Endothelial cell of umbilical vein (primary cell): ENCODE measurements at regions of chr11 and their contacts with region 1.

Region 1: GRCh38 chr11:110195845-110196754 is 100.3 kb downstream of the RDX start:
- DNase-seq: peak; percentile 45
- H3K4me3 ChIP-seq: no peak overlapping the region
- H3K27ac ChIP-seq: peak overlapping the region; percentile 78
- H3K4me1 ChIP-seq: peaks cover 36% of the 10 kb centered on the region
- H3K27me3 ChIP-seq: no peaks in the 10 kb centered on the region
- CTCF ChIP-seq: no peak
- POLR2A ChIP-seq: peak; percentile 42

Region 2: DNA sequence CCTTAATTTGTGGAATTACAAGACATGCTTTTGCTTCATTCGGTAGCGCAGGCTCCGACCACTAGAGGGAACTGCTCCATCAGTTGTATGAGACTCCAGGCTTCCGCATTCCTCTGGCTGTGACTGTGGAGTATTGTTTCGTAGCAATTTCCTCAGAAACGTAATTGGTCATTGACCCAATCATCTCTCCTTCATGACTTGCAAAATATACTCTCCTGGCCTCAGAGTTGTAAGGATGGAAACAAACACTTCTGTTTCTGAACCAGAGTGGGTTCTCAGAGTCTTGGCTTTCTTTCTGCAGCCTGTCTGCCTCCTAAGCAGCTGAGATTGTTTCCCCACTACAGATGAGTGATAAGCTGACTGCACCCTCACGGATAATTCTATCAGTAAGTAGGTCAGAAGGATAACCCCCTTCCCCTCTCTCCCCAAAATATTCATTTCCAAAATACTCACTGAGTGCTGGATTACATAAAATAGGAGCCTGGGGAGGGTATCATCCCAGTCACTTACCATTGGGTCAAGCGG is 249.7 kb before region 1 on chr11:
- CTCF ChIA-PET with region 1: interaction called, 6 read pairs
- POLR2A ChIA-PET with region 1: no interaction called
- dilution Hi-C with region 1: no loop called
- intact Hi-C with region 1: loop called (anchors 1 kb)
- DNase-seq: peak; percentile 97
- H3K4me3 ChIP-seq: peak overlapping the region in 1 of 3 experiments; percentile 31
- H3K27ac ChIP-seq: peak overlapping the region; percentile 95
- H3K4me1 ChIP-seq: peaks cover 8% of the 10 kb centered on the region
- H3K27me3 ChIP-seq: no peaks in the 10 kb centered on the region
- CTCF ChIP-seq: peak; percentile 91
- POLR2A ChIP-seq: no peak

Region 3: DNA sequence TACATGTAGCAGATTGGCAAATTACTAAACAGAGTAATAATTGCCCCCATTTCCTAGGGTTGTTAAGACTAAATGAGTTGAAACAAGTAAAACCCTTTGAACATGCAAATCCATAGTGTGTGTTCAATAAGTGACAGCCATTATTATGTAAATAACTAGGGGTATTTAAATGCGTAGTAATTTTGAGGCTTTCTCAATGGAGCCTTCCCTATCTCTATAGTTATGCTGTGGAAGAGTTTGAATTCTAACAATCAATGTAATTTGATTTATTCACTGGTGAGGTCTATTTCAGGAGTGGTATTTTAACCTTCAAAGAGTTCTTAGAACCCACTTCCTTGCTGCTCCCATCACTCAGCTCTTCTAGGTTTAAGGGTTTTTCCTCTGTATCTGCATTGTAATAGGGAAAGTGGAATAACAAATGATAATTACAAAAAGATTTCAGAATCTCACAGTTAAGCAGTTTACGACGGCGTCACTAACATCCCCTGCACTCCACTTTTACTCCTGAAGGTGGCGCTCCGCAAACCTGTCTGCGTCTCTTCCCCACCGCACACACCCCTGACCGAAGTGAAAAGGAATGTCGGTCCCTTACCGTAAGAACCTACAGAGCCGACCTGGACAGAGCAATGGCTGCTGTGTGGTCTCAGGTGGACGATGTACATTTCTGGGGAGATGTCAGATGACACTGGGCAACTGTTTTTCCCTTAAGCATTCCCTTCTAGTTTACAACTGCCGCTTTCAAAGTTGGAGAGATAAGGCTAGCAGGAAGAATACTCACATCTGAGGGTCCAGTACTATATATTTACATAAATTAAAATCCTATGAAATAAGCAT is 22.1 kb before region 1 on chr11:
- CTCF ChIA-PET with region 1: interaction called, 3 read pairs
- POLR2A ChIA-PET with region 1: no interaction called
- dilution Hi-C with region 1: no loop called
- intact Hi-C with region 1: loop called (anchors 1 kb)
- DNase-seq: peak; percentile 77
- H3K4me3 ChIP-seq: peak overlapping the region in 1 of 3 experiments; percentile 34
- H3K27ac ChIP-seq: no peak overlapping the region
- H3K4me1 ChIP-seq: peaks cover 7% of the 10 kb centered on the region
- H3K27me3 ChIP-seq: no peaks in the 10 kb centered on the region
- CTCF ChIP-seq: peak; percentile 87 to 92
- POLR2A ChIP-seq: no peak

Region 4: GRCh38 chr11:110362971-110363509 is 166.9 kb after region 1 on chr11:
- CTCF ChIA-PET with region 1: interaction called, 124 read pairs
- POLR2A ChIA-PET with region 1: interaction called, 3 read pairs
- dilution Hi-C with region 1: no loop called
- intact Hi-C with region 1: loop called (anchors 1 kb)
- DNase-seq: peak; percentile 95
- H3K4me3 ChIP-seq: peak overlapping the region in 1 of 3 experiments; percentile 2
- H3K27ac ChIP-seq: peak overlapping the region; percentile 85
- H3K4me1 ChIP-seq: peaks cover 28% of the 10 kb centered on the region
- H3K27me3 ChIP-seq: no peaks in the 10 kb centered on the region
- CTCF ChIP-seq: no peak
- POLR2A ChIP-seq: no peak

Region 5: DNA sequence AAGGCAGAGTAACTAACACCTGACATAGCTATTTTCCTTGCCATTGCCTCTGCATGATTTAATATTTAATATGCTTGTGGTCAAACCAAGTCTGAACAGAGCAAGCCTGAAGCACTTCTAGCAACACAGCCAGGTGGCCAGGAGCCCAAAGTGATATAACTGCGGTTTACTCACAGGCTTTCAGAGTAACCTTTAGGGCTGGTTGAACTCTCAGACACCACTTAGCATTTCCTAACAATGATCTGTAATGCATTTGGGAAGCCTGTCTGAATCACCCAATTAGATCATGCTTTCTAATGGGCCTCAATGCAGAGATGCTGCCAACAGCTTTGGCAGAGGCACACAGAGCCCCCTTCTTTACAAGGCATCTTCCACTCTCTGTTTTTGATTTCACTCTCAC is 329.8 kb after region 1 on chr11:
- CTCF ChIA-PET with region 1: no interaction called
- POLR2A ChIA-PET with region 1: no interaction called
- dilution Hi-C with region 1: no loop called
- intact Hi-C with region 1: loop called (anchors 5 kb)
- DNase-seq: no peak
- H3K4me3 ChIP-seq: no peak overlapping the region
- H3K27ac ChIP-seq: no peak overlapping the region
- H3K4me1 ChIP-seq: peaks cover 7% of the 10 kb centered on the region
- H3K27me3 ChIP-seq: peaks cover 0 to 2% of the 10 kb centered on the region in 2 experiments
- CTCF ChIP-seq: no peak
- POLR2A ChIP-seq: no peak